Activated T-helper 1 cell treated with anti-CD3 and anti-CD28 coated beads, Interleukin-12 subunit alpha, Interleukin-12 subunit beta, Interleukin-2, Interleukin-4 antibody, amounts not matched to agents 30 ng/mL and 10 ng/mL and 1 ng/mL, durations not matched to agents 14 hours and 24 hours and 36 hours (primary cell): ENCODE measurements at regions of chr16 and their contacts with region 1.

Region 1: GRCh38 chr16:55711959-55712876 is 56.4 kb downstream of the SLC6A2 start:
- DNase-seq: peak; percentile 26
- H3K4me3 Mint-ChIP-seq: no peak overlapping the region
- H3K27ac Mint-ChIP-seq: no peak overlapping the region
- H3K4me1 Mint-ChIP-seq: no peaks in the 10 kb centered on the region
- H3K27me3 Mint-ChIP-seq: peaks cover 2% of the 10 kb centered on the region

Region 2: DNA sequence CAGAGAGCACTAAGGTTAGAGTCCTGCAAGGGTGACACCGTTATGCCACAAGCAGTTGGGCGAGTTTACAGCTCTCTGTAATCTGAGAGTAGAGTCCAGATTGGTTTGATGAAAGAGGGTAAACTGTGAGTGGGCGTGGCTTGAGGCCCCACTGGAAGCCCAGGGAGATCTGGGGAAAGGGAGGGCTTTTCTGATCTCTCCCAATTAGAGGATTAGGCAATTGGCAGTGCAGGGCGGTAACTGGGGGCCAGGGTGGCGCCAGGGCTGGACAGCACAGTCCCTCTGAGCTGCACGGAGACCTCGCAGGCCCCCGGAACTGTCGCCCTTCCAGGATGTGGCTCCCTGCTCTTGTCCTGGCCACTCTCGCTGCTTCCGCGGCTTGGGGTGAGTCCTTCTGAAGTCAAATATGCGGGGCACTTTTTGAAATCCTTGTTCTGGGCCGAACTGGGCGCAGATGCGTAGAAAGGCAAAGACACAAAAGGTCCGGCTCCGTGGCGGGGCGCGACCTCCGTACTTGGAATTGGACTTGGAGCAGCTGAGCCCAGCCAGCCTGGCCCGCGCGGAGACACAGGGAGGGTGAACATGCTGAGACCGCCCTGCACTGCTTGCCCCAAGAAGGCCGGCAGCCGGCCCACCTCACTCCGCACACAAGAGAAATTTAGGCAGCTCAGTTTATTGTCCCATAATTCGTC is 48.2 kb after region 1 on chr16:
- intact Hi-C with region 1: no loop called
- DNase-seq: no peak
- H3K4me3 Mint-ChIP-seq: no peak overlapping the region
- H3K27ac Mint-ChIP-seq: no peak overlapping the region
- H3K4me1 Mint-ChIP-seq: no peaks in the 10 kb centered on the region
- H3K27me3 Mint-ChIP-seq: peaks cover 2% of the 10 kb centered on the region

Region 3: DNA sequence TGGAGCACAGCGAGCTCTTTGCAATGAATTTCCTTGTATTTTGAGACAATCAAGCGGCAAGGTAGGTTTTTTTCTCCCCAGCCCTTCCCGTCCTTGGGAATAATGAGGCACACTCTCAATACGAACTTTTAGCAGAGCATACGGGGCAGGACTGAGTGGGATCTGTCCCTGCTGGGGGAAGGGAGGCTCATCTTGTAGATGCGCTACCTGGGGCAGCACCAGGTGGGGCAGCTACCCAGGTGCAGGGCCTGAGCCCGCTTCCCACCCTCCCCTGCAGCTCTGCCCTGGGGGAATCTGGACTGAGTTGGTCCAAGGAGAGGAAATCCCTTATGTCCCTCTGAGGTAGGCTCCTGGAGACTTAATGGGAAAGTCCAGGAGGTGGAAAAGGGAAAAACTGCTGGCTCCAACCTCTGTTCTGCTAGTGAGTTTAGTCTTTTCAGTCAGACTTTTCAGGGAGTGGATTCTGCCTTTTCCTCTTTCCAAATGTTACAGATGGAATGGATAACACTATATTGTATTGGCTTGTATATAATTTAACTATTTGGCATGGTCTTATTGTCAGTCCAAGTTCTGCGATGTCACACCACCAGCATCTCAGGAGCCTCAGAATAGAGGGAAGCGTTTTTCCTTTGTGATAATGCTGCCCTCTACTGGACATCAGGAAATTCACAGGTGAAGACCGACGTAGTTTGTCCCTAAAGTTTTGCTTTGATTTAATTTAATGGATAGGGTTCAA is 130.3 kb after region 1 on chr16:
- intact Hi-C with region 1: loop called (anchors 1 kb)
- DNase-seq: no peak
- H3K4me3 Mint-ChIP-seq: no peak overlapping the region
- H3K27ac Mint-ChIP-seq: no peak overlapping the region
- H3K4me1 Mint-ChIP-seq: no peaks in the 10 kb centered on the region
- H3K27me3 Mint-ChIP-seq: peaks cover 7% of the 10 kb centered on the region

Region 4: GRCh38 chr16:55993088-55993487 is 280.9 kb after region 1 on chr16:
- intact Hi-C with region 1: no loop called
- DNase-seq: no peak
- H3K4me3 Mint-ChIP-seq: no peak overlapping the region
- H3K27ac Mint-ChIP-seq: no peak overlapping the region
- H3K4me1 Mint-ChIP-seq: no peaks in the 10 kb centered on the region
- H3K27me3 Mint-ChIP-seq: no peaks in the 10 kb centered on the region

Region 5: DNA sequence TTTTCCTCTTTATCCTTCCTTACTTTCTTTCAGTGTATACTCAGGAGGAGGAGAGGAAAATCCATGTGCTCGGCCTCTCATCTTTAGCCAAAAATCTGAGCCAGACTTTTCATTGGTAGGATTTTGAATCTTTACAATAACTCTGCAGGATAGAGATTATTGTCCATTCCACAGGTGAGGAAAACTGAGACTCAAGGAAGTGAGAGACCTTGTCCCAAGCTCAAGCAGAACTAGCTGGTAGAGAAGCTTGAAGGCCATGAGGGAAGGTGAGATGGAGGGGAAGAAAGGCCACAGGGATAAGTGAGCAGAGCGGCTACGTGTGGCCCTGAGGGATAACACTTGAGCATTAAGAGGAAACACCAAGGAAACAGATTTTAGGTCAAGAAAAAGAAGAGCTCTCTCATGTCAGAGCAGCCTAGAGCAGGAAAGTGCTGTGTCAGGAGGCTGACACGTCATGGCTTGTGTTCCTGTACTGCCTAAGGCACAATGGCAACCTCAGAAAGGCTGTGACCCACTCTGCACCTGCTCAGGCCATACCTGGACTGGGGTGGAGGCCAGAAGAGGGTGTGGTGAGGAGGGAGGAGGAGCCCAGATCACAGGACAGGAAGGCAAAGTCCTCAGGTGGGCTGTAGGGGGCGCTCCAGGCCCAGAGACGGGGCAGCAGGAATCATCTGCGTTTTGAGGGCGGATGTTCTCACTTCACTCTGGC is 864.5 kb after region 1 on chr16:
- intact Hi-C with region 1: no loop called
- DNase-seq: peak; percentile 81
- H3K4me3 Mint-ChIP-seq: no peak overlapping the region
- H3K27ac Mint-ChIP-seq: no peak overlapping the region
- H3K4me1 Mint-ChIP-seq: peaks cover 10% of the 10 kb centered on the region
- H3K27me3 Mint-ChIP-seq: peaks cover 23% of the 10 kb centered on the region